Activated CD4-positive, alpha-beta memory T cell treated with anti-CD3 and anti-CD28 coated beads for 36 hours (primary cell): ENCODE measurements at regions of chr22 and their contacts with region 1.

Region 1: DNA sequence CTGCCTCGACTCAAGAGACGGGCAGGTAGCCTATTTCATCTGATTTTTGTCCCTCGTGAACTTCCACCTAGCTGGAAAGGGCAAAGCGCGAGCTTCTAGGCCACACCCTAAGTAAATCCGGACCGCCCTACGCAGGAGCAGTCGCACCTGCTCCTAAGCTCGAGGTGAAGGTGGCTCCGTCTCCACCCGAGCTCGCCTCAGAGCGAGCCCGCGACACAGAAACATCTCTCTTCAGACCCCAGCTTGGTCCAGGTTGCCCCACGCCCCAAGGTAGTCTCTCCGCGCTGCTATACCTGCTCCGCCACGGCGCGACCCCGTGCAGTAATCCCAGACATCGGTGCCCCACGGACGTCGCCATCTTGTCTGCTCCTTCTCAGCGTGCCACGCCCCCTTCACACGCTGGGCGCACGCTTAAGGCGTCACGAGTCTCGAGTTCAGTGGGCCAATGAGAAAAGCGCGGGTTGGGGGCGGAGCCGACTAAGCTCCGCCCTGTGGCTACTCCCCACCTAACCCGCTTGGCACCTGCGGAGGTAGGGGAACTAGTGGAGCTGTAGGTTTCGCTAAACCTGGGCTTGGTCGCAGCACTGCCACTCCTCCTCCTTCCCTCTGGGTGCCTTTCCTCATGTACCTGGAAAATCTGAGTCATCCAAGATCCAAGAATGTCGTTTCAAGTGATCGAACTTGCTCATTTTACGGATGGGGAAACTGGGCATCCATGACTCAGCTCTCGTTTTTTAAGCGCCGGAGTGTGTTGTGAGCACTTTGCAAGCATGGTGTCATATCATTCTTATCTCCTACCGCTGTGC is at the start of gene PISD:
- DNase-seq: peak; percentile 98
- H3K4me3 Mint-ChIP-seq: peak within 1 kb of the TSS; percentile 98
- H3K27ac Mint-ChIP-seq: peak within 1 kb of the TSS; percentile 94
- H3K4me1 Mint-ChIP-seq: peaks cover 35% of the 10 kb centered on the region
- H3K27me3 Mint-ChIP-seq: peaks cover 2% of the 10 kb centered on the region
- total RNA-seq, gene PISD: 39.4 to 40.2 TPM

Region 2: DNA sequence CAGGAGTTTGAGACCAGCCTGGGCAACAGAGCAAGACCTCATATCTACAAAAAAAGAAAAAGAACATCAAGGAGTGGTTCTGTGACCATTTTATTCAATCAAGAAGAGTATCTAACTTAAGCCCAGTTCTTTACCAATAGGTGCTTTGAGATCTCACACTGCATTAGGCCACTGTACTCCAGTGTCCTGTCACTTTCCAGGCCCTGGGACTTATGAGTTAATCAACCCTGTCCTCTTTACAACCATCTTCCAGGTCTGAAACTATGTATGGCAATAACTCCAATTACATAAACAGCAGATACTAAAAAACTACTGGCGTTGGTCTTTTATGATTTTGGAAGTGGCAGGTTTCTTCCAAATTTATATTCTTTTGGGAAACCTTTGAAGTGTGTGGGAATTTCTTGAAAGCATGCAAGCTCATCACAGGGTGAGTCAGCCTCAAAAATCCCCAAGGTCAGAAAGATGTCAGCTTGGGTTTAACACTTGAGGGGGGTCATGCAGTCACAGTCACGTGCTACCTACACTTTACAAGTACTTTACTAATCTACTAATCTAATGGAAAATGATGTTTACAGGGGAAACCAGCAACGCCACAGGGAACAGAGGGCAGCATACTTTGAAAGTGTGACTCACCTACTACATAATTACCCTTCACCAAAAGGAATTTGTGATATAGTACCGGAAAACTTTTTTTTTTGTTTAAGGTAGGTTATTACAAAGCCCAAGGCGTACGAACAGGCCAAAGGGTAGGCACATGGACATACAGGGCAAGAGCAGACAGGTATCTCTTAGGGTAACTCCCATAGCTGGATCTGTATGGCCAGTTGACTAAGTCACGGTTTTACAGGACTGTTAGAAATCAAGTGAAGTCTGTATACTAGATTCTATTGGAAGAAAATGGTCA is 15.6 kb before region 1 on chr22:
- CTCF ChIA-PET with region 1: interaction called, 3 read pairs
- POLR2A ChIA-PET with region 1: interaction called, 11 read pairs
- intact Hi-C with region 1: loop called (anchors 2 kb)
- DNase-seq: peak; percentile 65
- H3K4me3 Mint-ChIP-seq: no peak overlapping the region
- H3K27ac Mint-ChIP-seq: peak overlapping the region; percentile 88
- H3K4me1 Mint-ChIP-seq: peaks cover 45% of the 10 kb centered on the region
- H3K27me3 Mint-ChIP-seq: no peaks in the 10 kb centered on the region

Region 3: GRCh38 chr22:31829505-31829904 is 167.5 kb after region 1 on chr22:
- CTCF ChIA-PET with region 1: interaction called, 11 read pairs
- POLR2A ChIA-PET with region 1: no interaction called
- intact Hi-C with region 1: loop called (anchors 5 kb)
- DNase-seq: peak; percentile 78
- H3K4me3 Mint-ChIP-seq: no peak overlapping the region
- H3K27ac Mint-ChIP-seq: peak overlapping the region; percentile 57
- H3K4me1 Mint-ChIP-seq: peaks cover 31% of the 10 kb centered on the region
- H3K27me3 Mint-ChIP-seq: no peaks in the 10 kb centered on the region

Region 4: GRCh38 chr22:31970490-31971444 is 308.7 kb after region 1 on chr22:
- CTCF ChIA-PET with region 1: interaction called, 76 read pairs
- POLR2A ChIA-PET with region 1: interaction called, 5 read pairs
- intact Hi-C with region 1: loop called (anchors 1 kb)
- DNase-seq: peak; percentile 92
- H3K4me3 Mint-ChIP-seq: peak overlapping the region; percentile 72
- H3K27ac Mint-ChIP-seq: no peak overlapping the region
- H3K4me1 Mint-ChIP-seq: peaks cover 12% of the 10 kb centered on the region
- H3K27me3 Mint-ChIP-seq: no peaks in the 10 kb centered on the region

Region 5: DNA sequence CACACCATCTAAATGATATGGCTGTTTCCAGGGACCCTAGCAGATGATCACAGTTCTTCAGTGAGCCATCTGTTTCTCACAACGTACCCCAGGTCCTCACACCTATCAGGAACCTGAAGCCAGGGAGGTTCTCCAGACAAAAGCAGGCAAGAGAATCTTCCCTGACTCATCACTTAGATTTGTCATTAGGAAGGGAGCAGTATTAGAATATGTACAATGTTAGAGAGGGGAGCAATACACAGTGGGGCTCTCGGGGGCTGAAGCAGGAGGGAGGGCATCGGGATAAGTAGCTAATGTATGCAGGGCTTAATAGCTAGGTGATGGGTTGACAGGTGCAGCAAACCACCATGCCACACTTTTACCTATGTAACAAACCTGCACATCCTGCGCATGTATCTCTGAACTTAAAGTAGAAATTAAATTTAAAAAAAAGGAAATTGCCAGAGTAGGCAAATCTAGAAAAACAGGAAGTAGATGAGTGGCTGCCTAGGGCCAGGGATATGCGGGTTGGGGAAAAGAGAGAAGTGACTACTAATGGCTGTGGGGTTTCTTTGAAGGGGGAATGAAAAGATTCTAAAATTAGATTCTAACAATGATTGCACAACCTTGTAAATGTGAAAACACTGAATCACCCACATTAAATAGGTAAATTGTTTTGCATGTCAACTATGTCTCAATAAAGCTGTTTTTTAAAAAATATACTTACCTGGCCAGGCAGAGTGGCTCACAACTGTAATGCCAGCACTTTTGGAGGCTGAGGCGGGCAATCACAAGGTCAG is 482.6 kb after region 1 on chr22:
- CTCF ChIA-PET with region 1: no interaction called
- POLR2A ChIA-PET with region 1: no interaction called
- intact Hi-C with region 1: loop called (anchors 5 kb)
- DNase-seq: peak; percentile 26
- H3K4me3 Mint-ChIP-seq: no peak overlapping the region
- H3K27ac Mint-ChIP-seq: peak overlapping the region; percentile 92
- H3K4me1 Mint-ChIP-seq: peaks cover 46% of the 10 kb centered on the region
- H3K27me3 Mint-ChIP-seq: no peaks in the 10 kb centered on the region